ENCODE measurements at regions of chr2 and their contacts with region 1.

Region 1: GRCh38 chr2:30711646-30712085 is 95.6 kb downstream of the CAPN13 start:
- DNase-seq: peak; percentile 78
- H3K4me3 ChIP-seq: no peak overlapping the region
- H3K27ac ChIP-seq: no peak overlapping the region
- H3K27me3 ChIP-seq: peaks cover 5% of the 10 kb centered on the region
- CTCF ChIP-seq: peak; percentile 100

Region 2: DNA sequence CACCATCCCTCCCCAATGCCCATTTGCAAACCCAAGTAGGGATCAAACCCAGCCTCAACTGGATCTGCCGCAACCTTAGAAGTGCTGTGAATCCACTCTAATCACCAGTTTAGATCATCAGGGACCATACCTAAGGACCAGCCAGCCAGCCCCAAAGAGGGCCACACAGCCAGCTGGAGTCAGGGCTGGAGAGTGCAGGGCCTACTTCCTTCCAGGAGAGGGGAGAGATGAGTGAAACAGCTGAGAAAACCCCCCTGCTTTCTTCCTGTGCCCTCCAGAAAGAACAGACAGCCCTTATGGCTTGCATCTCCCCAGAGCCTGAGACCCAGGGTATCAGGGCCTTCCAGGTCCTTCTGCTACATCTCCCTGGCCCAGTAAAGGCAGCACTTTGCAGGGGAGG is 539.0 kb before region 1 on chr2:
- CTCF ChIA-PET with region 1: interaction called, 623 read pairs
- POLR2A ChIA-PET with region 1: interaction called, 5 read pairs
- DNase-seq: no peak
- H3K4me3 ChIP-seq: no peak overlapping the region
- H3K27ac ChIP-seq: no peak overlapping the region
- H3K27me3 ChIP-seq: no peaks in the 10 kb centered on the region
- CTCF ChIP-seq: no peak

Region 3: DNA sequence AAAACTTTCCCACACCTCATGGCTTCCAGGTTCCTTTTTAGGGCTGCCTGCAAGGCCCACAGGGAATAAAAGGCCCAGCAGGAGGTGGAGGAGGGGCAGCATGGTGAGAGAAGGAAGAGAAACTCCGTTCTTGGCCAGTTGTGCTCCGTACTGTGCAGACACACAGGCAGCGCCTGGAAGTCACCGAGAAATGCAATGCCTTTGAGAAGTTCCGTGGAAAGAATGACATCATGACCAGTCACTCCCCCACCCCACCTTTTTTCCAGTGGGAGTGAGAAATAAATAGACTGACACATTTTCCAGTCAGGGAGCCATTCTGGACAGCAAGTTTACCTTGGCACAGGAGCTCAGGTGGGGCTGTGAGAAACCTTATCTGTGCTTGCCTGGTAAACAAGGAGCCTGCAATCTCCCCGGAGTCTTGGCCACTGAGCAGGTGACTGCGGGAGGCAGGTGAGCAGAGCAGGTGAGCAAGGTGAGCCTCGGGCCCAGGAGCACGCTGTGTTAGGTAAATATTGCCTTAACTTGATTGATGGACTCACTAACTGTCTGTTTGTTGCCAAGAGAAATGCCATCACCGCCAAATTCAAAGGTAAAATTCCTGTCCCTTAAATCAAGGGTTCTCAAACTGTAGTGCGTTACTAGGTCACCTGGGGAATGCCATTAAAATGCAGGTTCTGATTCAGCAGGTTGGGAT is 493.9 kb before region 1 on chr2:
- CTCF ChIA-PET with region 1: interaction called, 48 read pairs
- POLR2A ChIA-PET with region 1: no interaction called
- DNase-seq: no peak
- H3K4me3 ChIP-seq: no peak overlapping the region
- H3K27ac ChIP-seq: no peak overlapping the region
- H3K27me3 ChIP-seq: peaks cover 4% of the 10 kb centered on the region
- CTCF ChIP-seq: no peak

Region 4: DNA sequence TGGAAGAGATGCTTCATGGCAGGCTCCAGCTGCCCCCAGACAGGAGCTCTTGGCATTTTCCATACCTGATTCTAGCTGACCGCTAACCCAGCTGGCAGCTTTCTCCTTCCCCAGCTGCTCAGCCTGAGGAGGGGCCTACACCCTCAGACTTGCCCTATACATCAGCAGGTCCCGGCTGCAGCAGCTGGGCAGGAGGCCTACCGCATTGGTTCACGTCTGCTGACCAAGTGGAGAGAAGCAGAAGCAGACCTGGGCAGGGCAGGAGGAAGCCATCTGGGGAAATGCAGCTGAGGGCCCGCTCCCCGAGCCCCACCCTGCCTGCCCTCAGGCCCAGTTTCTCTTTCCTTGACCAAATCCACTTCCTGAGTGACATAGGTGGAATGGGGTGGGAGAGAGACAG is 429.6 kb before region 1 on chr2:
- CTCF ChIA-PET with region 1: interaction called, 12 read pairs
- POLR2A ChIA-PET with region 1: no interaction called
- DNase-seq: no peak
- H3K4me3 ChIP-seq: no peak overlapping the region
- H3K27ac ChIP-seq: no peak overlapping the region
- H3K27me3 ChIP-seq: no peaks in the 10 kb centered on the region
- CTCF ChIP-seq: no peak

Region 5: DNA sequence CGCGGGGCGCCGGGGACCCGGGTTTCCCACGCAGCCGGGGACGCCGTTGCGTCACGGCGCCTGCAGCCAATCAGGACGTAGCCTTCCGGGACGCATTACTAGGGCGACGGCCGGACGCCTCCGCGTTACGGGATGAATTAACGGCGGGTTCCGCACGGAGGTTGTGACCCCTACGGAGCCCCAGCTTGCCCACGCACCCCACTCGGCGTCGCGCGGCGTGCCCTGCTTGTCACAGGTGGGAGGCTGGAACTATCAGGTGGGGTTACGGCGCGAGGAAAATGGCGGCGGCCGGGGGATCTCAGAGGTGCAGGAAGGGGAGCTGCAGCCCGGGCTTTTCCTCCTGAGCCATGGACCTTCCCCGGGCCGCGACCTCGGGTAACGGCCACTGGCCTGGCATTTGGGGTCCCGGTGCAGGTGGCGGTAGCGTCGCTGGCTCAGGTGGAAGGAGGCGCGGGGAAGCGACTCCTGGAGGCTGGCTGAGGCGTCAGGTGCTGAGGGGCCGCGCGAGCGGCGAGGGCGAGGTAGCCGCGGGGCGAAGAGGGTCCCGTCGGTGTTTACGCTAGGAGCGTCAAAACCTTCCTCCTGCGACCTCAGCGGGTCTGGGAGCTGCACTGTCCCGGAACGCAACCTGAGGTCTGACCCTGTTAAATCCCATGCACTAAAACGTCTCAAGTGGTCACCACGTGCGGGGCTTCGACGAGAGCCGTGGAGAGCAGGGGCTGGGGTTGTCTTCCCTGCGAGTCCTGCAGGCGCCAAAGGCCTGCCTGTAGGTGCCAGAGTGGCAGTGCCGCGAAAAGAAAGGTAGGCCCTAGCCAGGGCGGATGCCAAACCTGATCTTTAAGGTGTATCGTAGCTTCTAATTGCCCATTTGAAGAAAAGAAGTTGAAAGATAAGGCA is 264.3 kb before region 1 on chr2 and contains the start of gene LCLAT1:
- CTCF ChIA-PET with region 1: interaction called, 15 read pairs
- POLR2A ChIA-PET with region 1: no interaction called
- DNase-seq: no peak
- H3K4me3 ChIP-seq: peak within 1 kb of the TSS; percentile 92
- H3K27ac ChIP-seq: peak within 1 kb of the TSS; percentile 69
- H3K27me3 ChIP-seq: no peaks in the 10 kb centered on the region
- CTCF ChIP-seq: peak; percentile 18; the same call in 1 of the 2 replicates
- polyA plus RNA-seq, gene LCLAT1: 19.5 and 25.2 TPM in 2 replicates

Region 6: GRCh38 chr2:30691948-30692828 is 19.5 kb before region 1 on chr2:
- CTCF ChIA-PET with region 1: interaction called, 29 read pairs
- POLR2A ChIA-PET with region 1: no interaction called
- DNase-seq: no peak
- H3K4me3 ChIP-seq: no peak overlapping the region
- H3K27ac ChIP-seq: no peak overlapping the region
- H3K27me3 ChIP-seq: no peaks in the 10 kb centered on the region
- CTCF ChIP-seq: peak; percentile 7; the same call in 1 of the 2 replicates

Region 7: GRCh38 chr2:30871980-30872789 is 160.5 kb after region 1 on chr2:
- CTCF ChIA-PET with region 1: no interaction called
- POLR2A ChIA-PET with region 1: no interaction called
- DNase-seq: no peak
- H3K4me3 ChIP-seq: no peak overlapping the region
- H3K27ac ChIP-seq: no peak overlapping the region
- H3K27me3 ChIP-seq: no peaks in the 10 kb centered on the region
- CTCF ChIP-seq: no peak

Region 8: GRCh38 chr2:31523871-31524492 is 812.3 kb after region 1 on chr2:
- CTCF ChIA-PET with region 1: interaction called, 74 read pairs
- POLR2A ChIA-PET with region 1: no interaction called
- DNase-seq: peak; percentile 13
- H3K4me3 ChIP-seq: no peak overlapping the region
- H3K27ac ChIP-seq: no peak overlapping the region
- H3K27me3 ChIP-seq: no peaks in the 10 kb centered on the region
- CTCF ChIP-seq: peak; percentile 79